Endothelial cell of umbilical vein (primary cell): ENCODE measurements at regions of chr7 and their contacts with region 1.

Region 1: GRCh38 chr7:28078036-28078901 is 102.3 kb downstream of the JAZF1 start:
- DNase-seq: peak; percentile 49
- H3K4me3 ChIP-seq: no peak overlapping the region
- H3K27ac ChIP-seq: no peak overlapping the region
- H3K4me1 ChIP-seq: peaks cover 7% of the 10 kb centered on the region
- H3K27me3 ChIP-seq: no peaks in the 10 kb centered on the region
- CTCF ChIP-seq: peak; percentile 90 to 98
- POLR2A ChIP-seq: no peak

Region 2: DNA sequence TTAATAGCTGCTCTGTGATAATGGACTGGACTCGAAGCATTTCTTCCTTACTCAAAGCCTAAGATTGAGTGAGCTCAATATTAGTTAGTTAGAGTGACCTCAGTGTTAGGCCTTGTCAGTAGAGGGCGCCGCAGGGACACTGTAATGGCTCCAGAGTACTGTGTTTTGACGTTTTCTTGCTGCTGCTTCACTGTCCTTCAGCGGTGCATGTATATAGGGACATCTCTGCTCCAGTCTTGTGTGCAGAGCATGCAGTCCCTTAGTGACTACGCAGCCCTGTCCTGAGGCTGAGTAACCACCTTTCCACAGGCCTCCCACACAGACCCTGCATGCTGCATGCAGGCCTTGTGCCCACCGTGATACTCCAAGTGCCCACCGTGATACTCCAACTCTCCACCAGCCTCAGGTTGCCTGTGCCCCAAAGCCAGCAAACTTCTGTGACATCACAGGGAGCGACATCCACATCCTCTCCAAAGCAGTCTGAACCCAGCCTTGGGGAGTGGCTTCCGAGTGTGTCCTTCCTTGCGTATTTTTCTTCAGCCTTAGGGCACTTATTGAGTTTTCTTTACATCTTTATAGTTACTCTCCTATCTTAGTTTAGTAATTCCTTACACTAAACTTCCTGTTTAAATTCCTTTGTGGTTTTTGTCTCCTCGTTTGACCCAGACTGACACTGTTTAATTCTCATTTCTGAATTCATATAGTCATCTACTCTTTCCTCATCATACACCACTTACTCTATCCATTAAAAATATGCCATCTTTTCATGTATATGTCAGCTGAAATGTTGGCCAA is 15.9 kb before region 1 on chr7:
- CTCF ChIA-PET with region 1: interaction called, 78 read pairs
- POLR2A ChIA-PET with region 1: no interaction called
- dilution Hi-C with region 1: no loop called
- intact Hi-C with region 1: loop called (anchors 1 kb)
- DNase-seq: peak; percentile 59
- H3K4me3 ChIP-seq: no peak overlapping the region
- H3K27ac ChIP-seq: no peak overlapping the region
- H3K4me1 ChIP-seq: peaks cover 6% of the 10 kb centered on the region
- H3K27me3 ChIP-seq: no peaks in the 10 kb centered on the region
- CTCF ChIP-seq: peak; percentile 67 to 77
- POLR2A ChIP-seq: no peak